ENCODE measurements at regions of chr3 and their contacts with region 1.

Region 1: DNA sequence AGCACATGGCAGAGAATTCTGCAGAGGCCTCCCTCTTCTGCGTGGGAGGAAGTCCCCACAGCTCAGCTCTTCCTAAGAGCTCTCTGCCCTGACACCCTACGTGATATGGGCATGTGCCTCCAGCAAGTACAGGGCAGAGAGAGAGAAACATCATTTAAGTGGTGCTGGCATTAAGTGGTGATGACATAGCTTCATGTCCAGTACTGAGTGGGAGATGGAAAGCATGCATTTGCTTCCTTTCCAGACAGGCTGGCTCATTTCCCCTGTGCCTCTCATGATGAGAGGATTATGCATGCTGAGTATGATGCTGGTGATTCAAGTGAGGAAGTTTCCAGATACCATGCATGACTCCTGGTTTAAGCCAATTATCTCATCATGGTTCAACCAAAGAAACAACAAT is 26.9 kb downstream of the BFSP2 start:
- DNase-seq: no peak
- ATAC-seq: no peak
- H3K4me3 ChIP-seq: no peak overlapping the region
- H3K27ac ChIP-seq: no peak overlapping the region
- H3K4me1 ChIP-seq: no peaks in the 10 kb centered on the region
- H3K27me3 ChIP-seq: no peaks in the 10 kb centered on the region
- CTCF ChIP-seq: no peak

Region 2: DNA sequence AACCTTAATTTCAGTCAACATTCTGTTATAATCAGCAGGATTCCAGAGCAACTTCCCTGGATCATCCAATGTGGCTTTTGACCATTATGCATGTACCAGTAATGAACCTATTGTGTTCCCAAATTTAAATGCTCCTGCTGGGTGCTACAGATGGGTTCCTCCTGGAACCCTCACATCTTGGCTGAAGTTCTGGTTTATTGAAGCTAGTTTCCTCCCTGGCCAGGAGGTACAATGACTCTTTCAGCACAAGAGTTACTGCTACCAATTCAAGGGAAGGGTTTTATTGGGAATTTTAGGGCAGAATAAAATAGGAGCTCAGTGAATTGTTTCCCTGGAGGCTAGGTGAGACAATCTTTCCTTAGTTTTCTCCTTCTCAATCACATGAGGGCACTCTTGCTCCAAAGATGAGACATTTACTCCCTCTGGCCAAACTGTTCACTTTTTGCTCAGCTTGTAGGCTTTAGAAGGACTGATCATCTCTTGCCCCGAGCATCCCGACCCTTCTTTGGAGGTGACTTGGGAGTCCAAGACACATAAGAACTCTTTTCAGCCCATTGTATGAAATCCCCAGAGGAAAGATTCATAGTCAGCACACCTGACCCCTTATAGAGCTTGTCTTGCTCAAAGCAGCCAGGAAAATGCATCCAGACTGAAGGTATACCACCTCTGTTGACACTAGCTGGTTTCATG is 695.7 kb before region 1 on chr3:
- intact Hi-C with region 1: loop called in 1 of 3 experiments (anchors 10 kb)
- DNase-seq: no peak
- ATAC-seq: peak; percentile 48 to 83 (median 78)
- H3K4me3 ChIP-seq: no peak overlapping the region
- H3K27ac ChIP-seq: no peak overlapping the region
- H3K4me1 ChIP-seq: no peaks in the 10 kb centered on the region
- H3K27me3 ChIP-seq: no peaks in the 10 kb centered on the region
- CTCF ChIP-seq: peak in 1 of 4 donors; percentile 6

Measured in pancreas (tissue), 10 donors.